Ovary (tissue), 10 donors: ENCODE measurements at regions of chr17 and their contacts with region 1.

Region 1: DNA sequence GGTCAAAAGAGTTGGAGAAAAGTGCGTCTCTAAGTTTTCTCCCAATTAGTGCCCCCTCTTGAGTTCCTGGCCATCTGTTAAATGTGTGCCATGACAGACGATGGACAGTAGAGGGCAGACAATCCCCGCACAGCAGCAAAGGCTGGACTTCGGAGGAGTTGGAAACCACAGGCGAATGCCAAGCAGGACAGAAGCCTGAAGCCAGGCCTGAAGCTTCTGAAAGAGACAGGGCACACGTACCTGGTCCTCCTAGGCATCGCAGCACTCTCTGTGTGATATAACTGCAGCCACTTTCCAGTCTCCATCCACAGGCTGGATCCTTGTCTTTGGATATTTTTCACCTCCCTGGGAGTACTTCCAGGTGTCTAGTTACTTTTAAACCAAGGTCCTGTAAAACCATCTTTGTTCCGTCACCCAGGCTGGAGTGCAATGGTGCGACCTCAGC is 14.5 kb downstream of the C17orf100 start:
- DNase-seq: peak; percentile 71 to 80 (median 76)
- H3K4me3 ChIP-seq: no peak overlapping the region
- H3K27ac ChIP-seq: no peak overlapping the region
- H3K4me1 ChIP-seq: peaks cover 3% of the 10 kb centered on the region
- H3K27me3 ChIP-seq: no peaks in the 10 kb centered on the region
- CTCF ChIP-seq: peak; percentile 74 to 83 (median 79)
- EP300 ChIP-seq: no peak
- POLR2A ChIP-seq: no peak

Region 2: DNA sequence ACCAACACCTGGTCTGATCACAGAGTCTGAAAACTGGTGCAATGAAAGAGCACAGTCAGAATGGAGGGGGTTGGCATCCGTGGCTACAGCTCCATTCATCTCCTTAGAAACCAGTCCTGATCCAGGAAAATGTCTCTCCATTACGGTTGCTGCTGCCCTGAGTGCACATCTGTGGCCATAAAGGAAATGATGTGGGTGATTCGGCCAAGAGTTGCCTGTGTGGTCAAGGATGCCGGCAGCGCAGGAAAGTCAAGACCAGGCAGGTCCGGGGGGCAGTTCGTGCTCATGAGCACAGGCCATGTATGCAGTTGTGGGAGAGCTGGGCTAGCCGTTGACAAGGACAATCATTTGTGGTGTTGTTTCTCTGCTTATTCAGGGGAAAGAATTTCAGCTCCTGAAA is 95.7 kb after region 1 on chr17:
- intact Hi-C with region 1: loop called in 2 of 4 experiments (anchors 10 kb)
- DNase-seq: no peak
- H3K4me3 ChIP-seq: no peak overlapping the region
- H3K27ac ChIP-seq: no peak overlapping the region
- H3K4me1 ChIP-seq: peaks cover 4% of the 10 kb centered on the region
- H3K27me3 ChIP-seq: no peaks in the 10 kb centered on the region
- CTCF ChIP-seq: no peak
- EP300 ChIP-seq: no peak
- POLR2A ChIP-seq: no peak

Region 3: DNA sequence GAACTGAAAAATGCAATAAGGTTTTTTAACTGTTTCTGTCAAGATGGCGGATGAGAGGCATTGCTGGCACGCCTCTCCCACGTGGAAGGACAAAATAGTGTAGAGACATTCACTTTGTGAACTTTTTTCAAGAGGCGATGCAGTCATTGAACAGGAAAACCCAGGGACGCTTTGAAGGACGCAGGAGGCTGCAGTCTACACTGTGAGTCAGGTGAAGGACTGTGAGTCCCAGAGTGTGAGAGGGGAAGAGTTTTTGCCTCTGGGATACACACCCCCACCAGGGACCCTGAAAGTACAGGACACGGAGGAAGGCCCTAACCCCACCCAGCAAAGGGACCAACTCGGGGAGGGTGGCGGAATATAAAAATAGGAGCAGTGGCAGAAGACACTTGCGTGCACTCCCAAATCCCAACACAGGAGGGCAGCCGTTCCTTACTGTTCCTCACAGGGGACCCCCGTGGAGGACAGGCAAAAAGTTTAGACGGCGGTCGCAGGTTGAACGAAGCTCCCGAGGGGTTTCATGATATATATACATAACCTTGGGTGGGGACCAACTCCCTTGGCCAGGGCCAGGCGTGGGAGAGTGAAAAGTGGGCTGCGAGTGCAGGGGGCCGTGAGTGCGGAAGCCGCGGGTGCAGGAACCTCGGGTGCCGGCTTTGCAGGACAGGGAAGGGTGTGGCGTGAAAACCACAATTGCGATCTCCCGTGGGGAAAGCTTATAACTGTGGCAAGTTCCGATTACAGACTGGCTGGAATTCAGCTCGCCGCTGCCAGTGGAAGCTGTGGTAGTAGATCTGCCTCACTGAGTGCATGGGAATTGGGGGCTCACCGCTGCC is 247.7 kb after region 1 on chr17:
- intact Hi-C with region 1: loop called in 1 of 4 experiments (anchors 5 kb)
- DNase-seq: peak; percentile 52 to 81 (median 78)
- H3K4me3 ChIP-seq: no peak overlapping the region
- H3K27ac ChIP-seq: no peak overlapping the region
- H3K4me1 ChIP-seq: no peaks in the 10 kb centered on the region
- H3K27me3 ChIP-seq: no peaks in the 10 kb centered on the region
- CTCF ChIP-seq: peak; percentile 53 to 61 (median 56)
- EP300 ChIP-seq: no peak
- POLR2A ChIP-seq: no peak

Region 4: DNA sequence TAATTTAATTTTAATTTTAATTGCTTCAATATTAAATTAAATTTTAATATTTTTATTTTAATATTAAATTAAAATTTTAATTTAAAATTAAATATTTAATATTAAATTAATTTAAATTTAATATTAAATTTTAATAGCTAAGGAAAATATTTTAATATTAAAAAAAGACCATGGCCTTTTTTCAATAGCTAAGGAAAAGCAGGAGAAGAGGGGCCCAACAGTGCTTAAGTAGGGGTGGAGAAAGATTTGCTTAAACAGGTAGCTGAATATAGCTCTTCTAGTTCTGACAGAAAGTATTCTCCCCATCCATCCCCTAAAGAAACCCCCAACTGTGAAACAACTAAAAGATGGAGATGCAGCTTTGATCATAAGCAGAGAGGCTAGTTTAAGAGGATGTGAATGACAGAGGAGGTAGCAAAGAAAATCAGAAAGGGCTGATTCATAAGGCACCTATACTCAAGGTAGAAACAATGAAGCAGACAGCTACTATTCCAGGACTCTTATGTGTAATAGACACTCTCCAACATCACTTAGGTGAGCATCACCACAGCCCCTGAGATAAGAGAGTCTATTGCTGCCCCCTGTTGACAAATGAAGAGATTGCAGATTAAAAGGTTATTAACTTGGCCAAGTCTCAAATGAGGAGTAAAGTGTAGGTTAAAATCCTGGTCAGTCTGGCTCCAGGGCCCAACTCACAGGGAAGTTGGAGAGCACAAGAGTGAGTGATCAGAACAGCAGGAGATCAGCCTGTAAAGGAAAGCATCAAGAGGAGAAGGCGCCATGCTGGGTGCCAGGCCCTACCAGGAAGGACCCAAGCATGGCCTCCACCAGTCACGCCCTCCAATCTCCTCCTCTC is 338.5 kb after region 1 on chr17:
- intact Hi-C with region 1: loop called in 2 of 4 experiments (anchors 10 kb)
- DNase-seq: no peak
- H3K4me3 ChIP-seq: no peak overlapping the region
- H3K27ac ChIP-seq: no peak overlapping the region
- H3K4me1 ChIP-seq: no peaks in the 10 kb centered on the region
- H3K27me3 ChIP-seq: no peaks in the 10 kb centered on the region
- CTCF ChIP-seq: peak; percentile 46 to 55 (median 46)
- EP300 ChIP-seq: no peak
- POLR2A ChIP-seq: no peak

Region 5: DNA sequence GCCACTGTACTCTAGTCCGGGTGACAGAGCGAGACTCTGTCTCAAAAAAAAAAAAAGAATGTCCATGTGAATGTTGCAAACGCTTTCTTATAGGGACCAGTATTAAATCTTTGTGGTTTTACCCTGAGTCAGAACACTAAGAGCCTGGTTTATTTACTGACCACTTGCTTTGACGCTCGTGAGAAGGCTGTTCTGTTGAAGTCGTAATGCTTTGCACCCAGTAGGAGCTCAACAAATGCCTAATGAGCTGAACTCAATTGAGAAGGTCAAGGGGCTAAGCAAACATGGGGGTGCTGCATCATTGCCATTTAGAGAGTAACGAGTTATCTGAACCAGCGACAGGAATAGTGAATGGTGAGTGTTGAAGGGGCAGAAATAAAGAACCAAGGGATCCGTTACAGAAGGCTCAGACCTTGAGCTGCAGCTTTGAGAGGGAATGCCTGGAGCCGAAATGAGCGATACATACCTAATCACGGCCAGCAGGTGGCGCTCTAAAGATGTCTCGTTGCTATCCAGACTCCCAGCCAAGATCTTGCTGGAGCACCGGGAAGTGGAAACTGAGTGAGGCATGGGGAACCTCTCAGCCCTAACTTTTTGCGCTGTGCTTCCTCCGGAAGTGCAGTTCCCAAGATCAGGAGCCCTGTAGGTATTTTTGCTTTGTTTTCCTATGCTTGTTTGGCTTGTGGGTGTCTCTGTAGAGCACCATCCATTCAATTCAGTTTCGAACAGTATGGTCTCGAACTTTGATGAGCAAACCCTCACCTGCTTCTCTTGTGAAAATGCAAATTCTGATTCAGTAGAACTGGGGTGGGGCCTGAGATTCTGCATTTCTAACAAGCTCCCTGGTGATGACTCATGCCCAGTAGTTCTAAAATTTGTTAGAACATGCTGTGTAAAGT is 1744.1 kb after region 1 on chr17:
- intact Hi-C with region 1: no loop called
- DNase-seq: peak; percentile 86 to 94 (median 92)
- H3K4me3 ChIP-seq: no peak overlapping the region
- H3K27ac ChIP-seq: no peak overlapping the region
- H3K4me1 ChIP-seq: no peaks in the 10 kb centered on the region
- H3K27me3 ChIP-seq: no peaks in the 10 kb centered on the region
- CTCF ChIP-seq: peak; percentile 71 to 80 (median 80)
- EP300 ChIP-seq: no peak
- POLR2A ChIP-seq: no peak